MCF 10A (cell line): ENCODE measurements at regions of chr9 and their contacts with region 1.

Region 1: DNA sequence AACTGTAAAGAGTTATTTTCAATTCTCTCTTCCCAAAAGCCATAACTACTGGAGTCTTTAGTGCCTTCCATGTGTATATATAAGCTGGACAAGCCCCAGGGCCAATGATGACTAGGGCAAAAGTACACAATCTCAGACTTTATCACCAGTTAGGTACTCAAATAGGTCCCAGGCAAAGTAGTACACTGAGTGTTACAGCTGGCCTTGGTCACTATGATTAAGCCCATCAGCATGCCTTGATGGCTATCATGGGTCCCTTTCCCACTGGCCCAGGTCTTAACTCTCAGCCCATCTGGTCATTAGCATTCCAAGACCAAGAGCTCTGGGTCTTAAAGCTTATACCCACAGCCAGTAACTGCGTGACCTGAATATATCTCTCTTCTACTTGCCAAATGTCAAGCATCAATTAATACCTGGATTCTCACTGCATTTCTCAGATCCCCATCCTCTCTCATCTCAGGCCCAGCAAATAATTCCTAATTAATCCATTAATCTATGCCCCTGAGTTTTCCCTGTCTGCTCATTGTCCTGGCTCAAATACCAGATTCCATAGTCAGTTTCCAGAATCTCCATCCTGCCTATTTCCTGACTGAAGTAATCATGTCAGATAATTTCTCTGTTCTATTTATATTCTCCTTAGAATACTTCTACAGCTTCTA is 62.3 kb downstream of the NR6A1 start:
- DNase-seq: no peak
- H3K4me3 Mint-ChIP-seq: no peak overlapping the region
- H3K27ac Mint-ChIP-seq: no peak overlapping the region
- H3K4me1 Mint-ChIP-seq: peaks cover 6% of the 10 kb centered on the region
- H3K27me3 Mint-ChIP-seq: no peaks in the 10 kb centered on the region
- CTCF ChIP-seq: no peak

Region 2: GRCh38 chr9:124537926-124538325 is 170.8 kb before region 1 on chr9:
- CTCF ChIA-PET with region 1: interaction called, 10 read pairs
- POLR2A ChIA-PET with region 1: no interaction called
- intact Hi-C with region 1: no loop called
- DNase-seq: no peak
- H3K4me3 Mint-ChIP-seq: no peak overlapping the region
- H3K27ac Mint-ChIP-seq: no peak overlapping the region
- H3K4me1 Mint-ChIP-seq: no peaks in the 10 kb centered on the region
- H3K27me3 Mint-ChIP-seq: no peaks in the 10 kb centered on the region
- CTCF ChIP-seq: no peak

Region 3: GRCh38 chr9:124629600-124629999 is 79.2 kb before region 1 on chr9:
- CTCF ChIA-PET with region 1: interaction called, 38 read pairs
- POLR2A ChIA-PET with region 1: interaction called, 3 read pairs
- intact Hi-C with region 1: no loop called
- DNase-seq: peak; percentile 35
- H3K4me3 Mint-ChIP-seq: no peak overlapping the region
- H3K27ac Mint-ChIP-seq: no peak overlapping the region
- H3K4me1 Mint-ChIP-seq: peaks cover 10% of the 10 kb centered on the region
- H3K27me3 Mint-ChIP-seq: no peaks in the 10 kb centered on the region
- CTCF ChIP-seq: no peak

Region 4: DNA sequence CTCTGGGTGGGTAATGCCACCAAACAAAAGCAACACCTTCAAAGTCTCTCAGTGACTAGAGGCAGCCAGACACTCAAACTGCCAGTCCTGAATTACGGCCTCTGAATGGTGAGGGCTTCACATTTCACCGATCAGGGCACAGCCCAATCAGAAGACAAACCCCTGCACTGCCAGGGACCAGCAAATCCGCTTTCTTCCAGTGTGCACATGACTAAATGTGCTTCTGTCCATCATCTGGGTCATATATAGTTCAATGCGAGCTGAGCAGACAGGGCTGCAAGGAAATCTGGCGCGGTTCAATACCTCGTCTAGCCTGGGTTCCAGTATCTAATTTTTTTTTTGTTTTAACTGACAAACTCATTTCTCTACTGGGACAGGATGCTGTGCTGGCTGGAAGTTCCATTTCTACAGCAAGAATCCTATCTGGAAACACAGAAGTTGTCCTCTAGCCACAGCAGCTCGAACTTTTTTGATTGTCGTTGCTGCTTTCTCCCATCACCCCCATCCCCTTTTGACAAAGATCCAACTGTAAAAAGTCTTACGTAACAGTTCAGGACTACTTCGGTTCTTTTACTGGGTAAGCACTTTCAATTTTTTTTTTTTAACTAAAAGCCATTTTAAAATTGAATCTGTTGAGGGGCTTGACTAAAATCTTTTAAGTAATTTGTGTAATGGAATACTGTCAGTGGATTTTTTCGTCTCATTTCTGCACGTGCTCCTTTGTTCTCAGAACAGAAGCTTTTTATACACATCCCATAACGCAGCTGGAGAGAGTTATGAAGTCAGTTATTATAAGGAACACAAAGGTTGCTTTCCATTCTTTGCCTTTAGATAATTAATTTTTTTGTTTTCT is 50.4 kb before region 1 on chr9:
- CTCF ChIA-PET with region 1: interaction called, 33 read pairs
- POLR2A ChIA-PET with region 1: interaction called, 3 read pairs
- intact Hi-C with region 1: loop called (anchors 1 kb)
- DNase-seq: peak; percentile 98
- H3K4me3 Mint-ChIP-seq: peak overlapping the region; percentile 98
- H3K27ac Mint-ChIP-seq: peak overlapping the region; percentile 96
- H3K4me1 Mint-ChIP-seq: peaks cover 20% of the 10 kb centered on the region
- H3K27me3 Mint-ChIP-seq: no peaks in the 10 kb centered on the region
- CTCF ChIP-seq: no peak

Region 5: DNA sequence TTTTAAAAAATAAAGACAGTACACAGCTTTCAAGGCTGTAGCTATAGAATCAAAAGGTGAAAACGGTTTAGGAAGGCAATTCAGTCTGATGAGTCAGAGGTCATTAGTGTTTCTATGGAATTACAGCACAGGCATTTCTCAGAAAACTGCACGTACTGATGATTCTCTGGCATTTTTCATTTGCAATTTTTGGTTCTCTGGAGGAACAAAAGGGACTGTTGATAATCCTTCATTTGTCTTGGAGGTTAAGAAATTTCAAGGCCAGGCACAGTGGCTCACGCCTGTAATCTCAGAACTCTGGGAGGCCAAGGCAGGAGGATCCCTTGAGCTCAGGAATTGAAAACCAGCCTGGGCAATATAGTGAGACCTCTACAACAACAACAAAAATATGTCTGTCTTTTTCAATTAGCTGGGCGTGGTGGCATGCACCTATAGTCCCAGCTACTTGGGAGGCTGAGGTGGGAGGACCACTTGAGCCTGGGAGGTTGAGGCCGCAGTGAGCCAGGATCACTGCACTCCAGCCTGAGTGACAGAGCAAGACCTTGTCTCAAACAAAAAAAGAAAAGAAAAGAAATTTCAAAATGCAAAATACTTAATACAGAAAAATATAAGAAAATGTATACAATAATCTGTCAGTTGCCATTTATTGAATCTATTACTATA is 35.1 kb after region 1 on chr9:
- CTCF ChIA-PET with region 1: interaction called, 12 read pairs
- POLR2A ChIA-PET with region 1: no interaction called
- intact Hi-C with region 1: no loop called
- DNase-seq: no peak
- H3K4me3 Mint-ChIP-seq: no peak overlapping the region
- H3K27ac Mint-ChIP-seq: no peak overlapping the region
- H3K4me1 Mint-ChIP-seq: no peaks in the 10 kb centered on the region
- H3K27me3 Mint-ChIP-seq: no peaks in the 10 kb centered on the region
- CTCF ChIP-seq: no peak

Region 6: GRCh38 chr9:124764774-124765438 is 56.1 kb after region 1 on chr9:
- CTCF ChIA-PET with region 1: interaction called, 42 read pairs
- POLR2A ChIA-PET with region 1: no interaction called
- intact Hi-C with region 1: loop called (anchors 2 kb)
- DNase-seq: peak; percentile 35
- H3K4me3 Mint-ChIP-seq: no peak overlapping the region
- H3K27ac Mint-ChIP-seq: no peak overlapping the region
- H3K4me1 Mint-ChIP-seq: peaks cover 11% of the 10 kb centered on the region
- H3K27me3 Mint-ChIP-seq: no peaks in the 10 kb centered on the region
- CTCF ChIP-seq: peak; percentile 37

Region 7: GRCh38 chr9:125706661-125707471 is 998.1 kb after region 1 on chr9 and contains the start of gene MAPKAP1:
- CTCF ChIA-PET with region 1: no interaction called
- POLR2A ChIA-PET with region 1: no interaction called
- intact Hi-C with region 1: no loop called
- DNase-seq: peak; percentile 96
- H3K4me3 Mint-ChIP-seq: peak within 1 kb of the TSS; percentile 82
- H3K27ac Mint-ChIP-seq: peak within 1 kb of the TSS; percentile 83
- H3K4me1 Mint-ChIP-seq: peaks cover 24% of the 10 kb centered on the region
- H3K27me3 Mint-ChIP-seq: no peaks in the 10 kb centered on the region
- CTCF ChIP-seq: no peak
- total RNA-seq, gene MAPKAP1: 74.9 and 111 TPM in 2 replicates